ENCODE measurements at regions of chr4 and their contacts with region 1.

Region 1: GRCh38 chr4:48490012-48490679 is at the start of gene ZAR1:
- DNase-seq: no peak
- H3K4me3 ChIP-seq: peak within 1 kb of the TSS; percentile 49 to 56
- H3K27ac ChIP-seq: no peak within 1 kb of the TSS
- H3K4me1 ChIP-seq: peaks cover 0 to 5% of the 10 kb centered on the region in 2 donors
- H3K27me3 ChIP-seq: peaks cover 9% of the 10 kb centered on the region
- CTCF ChIP-seq: no peak
- total RNA-seq, gene ZAR1: 1.4 TPM

Region 2: DNA sequence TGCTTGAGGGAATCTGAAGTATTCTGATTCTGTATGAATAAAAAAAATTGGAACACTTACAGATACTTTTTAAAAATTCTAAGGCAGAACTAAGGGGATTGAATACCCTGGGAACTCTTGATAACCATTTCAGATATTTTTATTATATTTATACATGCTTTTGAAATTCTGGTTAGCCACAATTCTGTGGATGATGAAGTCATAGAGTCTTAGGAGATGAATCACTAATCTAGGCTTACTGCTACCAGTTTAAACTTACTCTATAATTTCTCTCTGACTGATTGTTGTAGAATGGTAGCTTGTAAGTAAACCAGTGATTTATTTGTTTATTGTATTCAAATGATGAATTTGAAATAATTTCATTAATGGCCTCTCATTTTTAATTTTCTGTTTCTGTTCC is 160.2 kb before region 1 on chr4:
- intact Hi-C with region 1: loop called (anchors 10 kb)
- DNase-seq: no peak
- H3K4me3 ChIP-seq: no peak overlapping the region
- H3K27ac ChIP-seq: peak overlapping the region in 1 of 2 donors; percentile 9
- H3K4me1 ChIP-seq: no peaks in the 10 kb centered on the region
- H3K27me3 ChIP-seq: no peaks in the 10 kb centered on the region
- CTCF ChIP-seq: no peak

Region 3: GRCh38 chr4:48722509-48723446 is 232.6 kb after region 1 on chr4:
- intact Hi-C with region 1: no loop called
- DNase-seq: no peak
- H3K4me3 ChIP-seq: no peak overlapping the region
- H3K27ac ChIP-seq: no peak overlapping the region
- H3K4me1 ChIP-seq: peaks cover 4 to 15% of the 10 kb centered on the region in 2 donors
- H3K27me3 ChIP-seq: no peaks in the 10 kb centered on the region
- CTCF ChIP-seq: no peak